Posterior cingulate gyrus (tissue), 11 donors: ENCODE measurements at regions of chr2 and their contacts with region 1.

Region 1: DNA sequence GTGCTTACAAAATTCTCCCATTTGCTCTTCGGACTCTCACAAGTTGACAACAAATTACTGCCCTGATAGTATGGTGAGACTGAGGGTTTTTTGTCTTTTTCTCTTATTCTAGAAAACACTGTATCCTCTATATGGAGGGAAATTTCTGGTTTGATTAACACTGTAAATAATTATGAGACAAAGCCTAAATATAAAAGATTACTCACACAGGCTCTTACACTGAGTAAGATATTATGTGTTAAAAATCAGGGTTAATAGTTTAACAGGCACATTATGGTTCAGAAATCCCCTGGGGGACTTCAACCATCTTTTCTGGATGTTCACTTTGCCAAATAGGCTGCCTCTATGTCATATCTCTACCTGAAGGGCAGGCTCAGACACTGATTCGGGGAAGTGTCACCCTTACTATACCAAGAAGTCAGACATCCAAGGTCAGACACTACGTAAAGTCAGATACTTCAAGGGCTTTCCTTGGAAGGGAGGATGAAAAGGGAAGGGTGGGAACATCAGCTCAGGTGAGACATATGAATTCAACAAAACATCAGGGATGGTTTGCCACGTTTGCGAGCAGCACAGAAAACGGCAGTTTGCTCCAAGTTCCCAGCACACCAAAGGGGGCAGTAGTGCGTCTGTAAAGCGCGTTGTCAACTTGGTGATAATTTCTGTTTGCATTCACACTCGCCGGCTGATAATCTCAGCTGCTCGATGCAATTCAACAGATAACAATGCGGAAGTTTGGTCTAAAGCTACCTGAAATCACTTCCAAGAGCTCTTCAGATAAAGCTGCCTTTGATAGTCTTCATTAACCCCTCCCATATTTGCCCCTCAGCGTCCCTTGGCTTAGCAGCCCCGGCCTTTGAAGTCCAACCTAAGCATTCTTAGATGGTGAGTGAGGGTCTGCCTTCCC is 972 bp upstream of the RASGRP3 start:
- DNase-seq: peak; percentile 52 to 96 (median 80)

Region 2: GRCh38 chr2:33406622-33407021 is 68.9 kb before region 1 on chr2:
- intact Hi-C with region 1: no loop called
- DNase-seq: no peak

Region 3: GRCh38 chr2:33441235-33441810 is 34.2 kb before region 1 on chr2:
- intact Hi-C with region 1: loop called (anchors 2 kb)
- DNase-seq: peak in 9 of 10 donors; percentile 21 to 93 (median 68)

Region 4: DNA sequence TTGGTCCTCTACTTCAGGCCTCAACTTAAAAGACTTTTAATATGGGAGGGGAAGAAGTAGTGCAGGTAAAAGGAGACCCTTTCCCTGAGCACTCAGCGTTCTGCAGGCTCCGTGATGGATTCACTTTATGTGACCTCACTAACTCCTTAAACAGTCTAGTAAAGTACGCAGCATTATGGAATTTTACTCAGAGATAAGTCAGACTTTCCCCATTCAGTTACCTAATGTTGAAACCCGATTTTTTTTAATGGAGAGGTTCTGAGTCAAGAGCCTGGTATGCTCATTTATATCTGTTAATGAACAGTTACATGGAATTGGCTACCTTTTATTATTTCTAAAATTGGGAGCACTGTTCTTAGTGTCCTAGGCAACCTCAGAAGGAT is 35.1 kb after region 1 on chr2:
- intact Hi-C with region 1: loop called (anchors 5 kb)
- DNase-seq: no peak

Region 5: DNA sequence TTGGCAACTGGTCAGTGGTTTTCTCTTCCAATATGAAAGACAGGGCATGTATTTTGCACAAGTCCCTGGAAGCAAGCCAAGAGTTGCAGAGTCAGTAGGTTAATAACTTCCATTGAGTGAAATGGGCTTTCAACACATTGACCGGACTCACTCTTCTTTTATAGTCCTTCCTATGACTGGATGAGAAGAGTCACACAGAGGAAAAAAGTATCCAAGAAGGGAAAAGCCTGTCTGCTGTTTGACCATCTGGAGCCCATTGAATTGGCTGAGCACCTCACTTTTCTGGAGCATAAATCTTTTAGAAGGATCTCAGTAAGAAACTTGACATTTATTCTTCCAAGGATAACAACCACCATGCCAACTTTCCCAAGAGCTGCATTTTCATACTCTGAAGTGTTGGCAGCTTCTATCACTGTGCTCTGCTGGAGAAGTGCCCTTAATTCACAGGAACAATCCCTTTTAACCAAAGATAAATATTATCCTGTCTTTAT is 46.4 kb after region 1 on chr2:
- intact Hi-C with region 1: no loop called
- DNase-seq: no peak

Region 6: DNA sequence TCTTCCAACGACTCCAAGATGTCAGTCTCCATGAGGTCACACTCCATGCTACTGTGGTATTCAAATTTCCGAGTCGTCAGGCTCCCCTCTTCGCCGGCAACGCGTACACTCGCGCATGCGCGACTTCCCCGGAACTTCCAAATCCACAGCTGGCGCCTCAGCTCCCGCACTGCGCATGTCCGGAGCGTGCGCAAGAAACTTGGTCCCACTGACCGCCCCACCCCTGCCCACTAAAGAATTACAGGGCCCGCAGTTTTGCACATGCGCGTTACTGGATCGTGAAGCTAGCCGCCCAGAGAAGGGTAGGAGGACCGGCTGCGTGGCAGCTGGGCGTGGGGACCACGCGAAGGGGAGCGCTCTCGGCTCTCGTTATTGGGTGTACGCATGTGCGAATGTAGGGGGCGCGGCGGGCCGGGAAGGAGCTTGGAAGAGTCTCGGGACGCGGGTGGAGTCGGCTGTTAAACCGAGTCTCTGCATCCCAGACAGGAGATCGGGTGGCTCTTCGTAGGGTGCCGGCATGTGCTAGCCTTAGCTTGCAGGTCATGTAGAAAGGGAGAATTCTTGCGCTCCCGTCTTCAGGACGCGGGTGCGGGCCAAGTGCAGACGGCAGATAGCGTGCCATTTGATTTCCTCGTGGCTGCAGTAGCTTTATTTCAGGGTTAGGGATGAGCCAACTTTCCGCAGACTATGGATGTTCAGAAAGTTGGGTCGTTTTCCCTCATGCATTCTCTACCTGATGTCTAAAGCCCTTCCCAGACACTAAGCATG is 123.9 kb after region 1 on chr2 and contains the start of gene FAM98A:
- intact Hi-C with region 1: loop called (anchors 5 kb)
- DNase-seq: peak; percentile 97 to 100 (median 98)